GM13976 (cell line): ENCODE measurements at regions of chr18 and their contacts with region 1.

Region 1: DNA sequence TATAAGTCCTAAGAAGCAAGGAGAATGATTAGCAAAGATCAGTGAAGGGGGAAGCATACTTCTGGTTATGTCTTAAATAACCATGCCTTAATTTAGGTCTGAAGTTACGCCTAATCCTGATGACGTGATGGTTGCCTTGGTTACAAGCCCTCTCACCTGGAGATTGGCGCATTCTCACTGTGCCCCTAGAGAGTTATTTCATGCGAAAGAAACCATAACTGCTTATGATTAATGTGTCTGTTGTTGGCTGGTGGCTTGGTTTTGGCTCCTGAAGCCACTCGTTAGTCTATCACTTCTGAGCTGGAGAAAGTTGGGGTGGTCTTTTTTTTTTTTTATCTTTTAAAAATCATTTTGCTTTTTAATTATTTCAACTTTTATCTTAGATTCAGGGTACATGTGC is 47.0 kb downstream of the TNFRSF11A start:
- DNase-seq: peak; percentile 63
- CTCF ChIP-seq: no peak

Region 2: GRCh38 chr18:62249478-62250097 is 122.6 kb before region 1 on chr18:
- in situ Hi-C with region 1: loop called (anchors 25 kb)
- DNase-seq: peak; percentile 46
- CTCF ChIP-seq: peak; percentile 70